Colonic mucosa (tissue), 4 donors: ENCODE measurements at regions of chr2 and their contacts with region 1.

Region 1: DNA sequence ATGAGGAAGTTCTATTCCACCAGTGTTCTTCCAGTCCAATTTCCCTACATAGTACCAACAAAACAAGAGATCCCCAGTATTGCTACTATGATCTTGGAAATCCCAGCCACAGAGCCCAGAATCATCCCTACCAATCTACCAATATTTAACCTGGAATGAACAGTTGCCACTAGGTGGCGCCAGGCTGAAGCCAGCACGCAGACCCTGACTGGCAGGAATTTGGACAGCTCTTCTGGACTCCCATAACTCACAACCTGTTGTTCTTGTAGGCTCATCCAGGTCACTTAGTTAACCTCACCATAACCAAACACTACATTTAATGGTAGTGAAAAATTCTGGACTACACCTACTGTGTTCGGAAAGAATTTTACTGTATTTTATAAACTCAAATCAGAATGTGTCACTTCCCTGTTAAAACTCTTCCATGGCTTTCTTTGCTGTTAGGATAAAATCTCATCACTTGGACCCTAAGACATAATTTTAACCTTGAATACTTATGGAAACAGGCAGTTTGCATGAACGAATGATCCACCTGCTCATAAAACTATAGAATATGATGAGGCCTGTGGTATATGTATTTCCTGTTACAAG is 59.8 kb upstream of the SLC38A11 start:
- DNase-seq: peak; percentile 68
- H3K4me3 ChIP-seq: no peak overlapping the region
- H3K27ac ChIP-seq: no peak overlapping the region
- H3K4me1 ChIP-seq: no peaks in the 10 kb centered on the region
- H3K27me3 ChIP-seq: no peaks in the 10 kb centered on the region
- CTCF ChIP-seq: peak; percentile 85

Region 2: GRCh38 chr2:164910101-164910899 is 104.8 kb before region 1 on chr2:
- intact Hi-C with region 1: no loop called
- DNase-seq: peak; percentile 49
- H3K4me3 ChIP-seq: no peak overlapping the region
- H3K27ac ChIP-seq: peak overlapping the region; percentile 43
- H3K4me1 ChIP-seq: no peaks in the 10 kb centered on the region
- H3K27me3 ChIP-seq: no peaks in the 10 kb centered on the region
- CTCF ChIP-seq: no peak

Region 3: GRCh38 chr2:165203689-165204559 is 188.8 kb after region 1 on chr2 and contains the start of gene SCN3A:
- intact Hi-C with region 1: loop called (anchors 10 kb)
- DNase-seq: peak; percentile 20
- H3K4me3 ChIP-seq: no peak within 1 kb of the TSS
- H3K27ac ChIP-seq: no peak within 1 kb of the TSS
- H3K4me1 ChIP-seq: no peaks in the 10 kb centered on the region
- H3K27me3 ChIP-seq: no peaks in the 10 kb centered on the region
- CTCF ChIP-seq: peak; percentile 57
- total RNA-seq, gene SCN3A: 0.40 to 0.80 TPM